Dendritic cell treated with granulocyte-macrophage colony-stimulating factor and Interleukin-4, amounts not matched to agents 40 ng/mL and 50 ng/mL, for 4 days (primary cell): ENCODE measurements at regions of chr17 and their contacts with region 1.

Region 1: DNA sequence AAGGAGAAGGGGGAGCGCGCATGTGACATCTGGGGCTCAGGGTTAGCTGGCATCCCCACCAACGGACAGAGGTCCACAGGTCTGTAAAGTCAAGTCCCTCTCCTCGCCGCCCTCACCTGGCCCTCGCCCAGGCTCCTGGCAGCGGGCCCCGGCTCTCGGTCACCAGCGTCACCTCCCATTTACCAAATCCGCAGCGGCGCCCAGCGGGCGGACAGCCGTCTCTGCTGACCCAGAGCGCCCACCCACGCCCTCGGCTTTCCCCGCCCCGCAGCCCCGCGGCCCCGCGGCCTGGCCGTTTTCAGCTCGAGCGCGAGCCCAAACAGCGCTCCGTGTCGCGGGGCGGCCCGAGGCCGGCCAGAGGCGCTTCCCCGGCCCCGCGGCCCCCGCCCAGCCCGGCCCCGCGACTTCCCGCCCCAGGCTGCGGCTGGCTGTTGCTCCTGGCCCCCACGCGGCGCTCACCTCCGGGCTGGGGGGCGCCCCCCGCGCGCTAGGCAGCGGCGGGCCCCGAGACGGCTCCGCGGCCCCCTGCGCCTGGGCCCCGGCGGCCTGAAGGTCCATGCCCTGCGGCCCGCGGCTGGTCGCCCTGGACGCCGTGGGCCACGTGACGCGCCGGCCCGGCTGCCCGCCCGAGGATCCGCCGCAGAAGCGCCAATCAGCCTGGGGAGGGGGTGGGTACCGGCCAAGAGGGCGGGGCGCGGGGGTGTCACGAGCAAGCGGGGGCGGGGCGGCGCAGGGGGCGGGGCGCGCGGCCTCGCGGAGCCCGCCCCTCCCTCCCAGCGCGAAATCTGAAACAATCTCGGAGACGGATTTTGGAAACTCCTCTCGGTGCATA is at the start of gene COPRS:
- H3K4me3 Mint-ChIP-seq: peak within 1 kb of the TSS; percentile 76
- H3K27ac Mint-ChIP-seq: peak within 1 kb of the TSS; percentile 1
- H3K4me1 Mint-ChIP-seq: peaks cover 29% of the 10 kb centered on the region
- H3K27me3 Mint-ChIP-seq: no peaks in the 10 kb centered on the region

Region 2: GRCh38 chr17:31549525-31550388 is 309.1 kb before region 1 on chr17:
- intact Hi-C with region 1: loop called (anchors 5 kb)
- H3K4me3 Mint-ChIP-seq: peak overlapping the region; percentile 89
- H3K27ac Mint-ChIP-seq: peak overlapping the region; percentile 92
- H3K4me1 Mint-ChIP-seq: peaks cover 23% of the 10 kb centered on the region
- H3K27me3 Mint-ChIP-seq: peaks cover 15% of the 10 kb centered on the region